ENCODE measurements at regions of chr16 and their contacts with region 1.

Region 1: GRCh38 chr16:4506450-4506849 is 30.3 kb downstream of the HMOX2 start:
- DNase-seq: peak; percentile 74
- ATAC-seq: peak; percentile 75
- H3K4me3 Mint-ChIP-seq: no peak overlapping the region
- H3K27ac Mint-ChIP-seq: peak overlapping the region; percentile 88
- H3K4me1 Mint-ChIP-seq: peaks cover 48% of the 10 kb centered on the region
- H3K27me3 Mint-ChIP-seq: no peaks in the 10 kb centered on the region
- CTCF ChIP-seq: peak; percentile 97

Region 2: GRCh38 chr16:4487955-4488498 is 18.4 kb before region 1 on chr16:
- CTCF ChIA-PET with region 1: interaction called, 14 read pairs
- POLR2A ChIA-PET with region 1: interaction called, 8 read pairs
- intact Hi-C with region 1: no loop called
- DNase-seq: no peak
- ATAC-seq: peak; percentile 43
- H3K4me3 Mint-ChIP-seq: no peak overlapping the region
- H3K27ac Mint-ChIP-seq: peak overlapping the region; percentile 86
- H3K4me1 Mint-ChIP-seq: peaks cover 55% of the 10 kb centered on the region
- H3K27me3 Mint-ChIP-seq: no peaks in the 10 kb centered on the region
- CTCF ChIP-seq: no peak

Region 3: DNA sequence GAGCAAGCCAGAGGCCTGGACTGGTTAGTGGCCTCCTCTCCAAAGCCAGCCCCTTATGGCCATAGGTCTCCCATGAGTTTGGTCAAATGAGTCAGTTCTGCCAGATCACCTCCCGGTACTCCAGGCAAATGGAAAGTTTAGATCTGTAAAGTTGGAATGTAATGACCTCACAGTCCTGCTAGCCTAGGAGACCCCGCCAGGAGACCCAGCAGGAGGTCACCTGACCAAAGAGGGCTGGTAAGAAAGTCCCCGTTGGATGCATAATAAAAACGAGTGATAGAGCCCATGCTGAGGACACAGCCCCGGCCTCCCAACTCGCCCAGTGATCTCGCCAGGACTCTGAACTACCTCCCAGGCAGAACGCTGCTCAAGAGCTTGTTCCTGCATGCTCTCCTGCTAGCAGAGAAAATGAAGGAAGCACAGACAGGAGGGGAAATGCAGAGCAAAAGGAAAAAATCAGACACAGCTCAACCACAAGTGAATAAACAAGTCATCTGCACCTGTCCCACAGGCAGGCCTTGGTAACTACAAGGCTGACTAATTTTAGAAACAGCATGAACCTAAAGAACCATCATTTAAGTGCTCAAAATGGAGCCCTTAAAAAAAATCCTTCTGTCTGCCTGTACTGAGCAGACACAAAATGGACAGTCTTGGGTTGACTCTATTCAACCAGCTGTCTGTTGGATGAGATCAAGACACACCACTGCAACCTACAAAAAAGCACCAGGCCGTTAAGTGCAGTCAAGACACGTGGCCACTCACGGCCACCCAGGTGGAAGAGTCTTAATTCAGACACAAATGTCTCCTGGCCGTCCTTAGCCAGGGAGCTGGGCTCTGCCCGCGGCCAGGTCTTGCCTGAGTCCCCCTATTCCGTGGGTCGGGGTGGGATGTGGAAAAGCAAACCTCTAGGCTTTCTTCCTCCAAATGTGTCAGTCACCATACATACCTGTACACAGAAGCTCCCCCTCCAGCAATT is 22.9 kb after region 1 on chr16:
- CTCF ChIA-PET with region 1: interaction called, 17 read pairs
- POLR2A ChIA-PET with region 1: interaction called, 4 read pairs
- intact Hi-C with region 1: no loop called
- DNase-seq: peak; percentile 54
- ATAC-seq: peak; percentile 82
- H3K4me3 Mint-ChIP-seq: peak overlapping the region; percentile 34
- H3K27ac Mint-ChIP-seq: peak overlapping the region; percentile 96
- H3K4me1 Mint-ChIP-seq: peaks cover 45% of the 10 kb centered on the region
- H3K27me3 Mint-ChIP-seq: no peaks in the 10 kb centered on the region
- CTCF ChIP-seq: no peak

Region 4: DNA sequence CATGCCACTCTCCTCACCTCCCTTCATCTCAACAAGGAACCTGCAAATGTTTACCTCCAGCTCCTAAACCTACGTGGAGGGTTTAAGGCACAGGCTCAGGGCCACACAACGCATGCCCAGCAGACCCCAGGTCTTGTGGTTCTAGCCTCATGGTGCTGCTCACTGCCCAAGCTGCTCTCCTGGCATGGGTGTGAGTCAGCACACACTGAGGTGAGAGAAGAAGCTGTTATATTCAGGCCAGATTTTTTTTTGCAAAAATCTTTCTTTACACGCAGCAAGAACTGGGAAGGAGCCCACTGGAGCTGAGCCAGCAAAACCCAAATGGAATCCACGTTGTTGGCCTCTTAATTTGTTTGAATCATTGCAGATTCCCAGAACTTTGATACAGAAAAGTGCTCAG is 44.1 kb after region 1 on chr16:
- CTCF ChIA-PET with region 1: interaction called, 174 read pairs
- POLR2A ChIA-PET with region 1: interaction called, 9 read pairs
- intact Hi-C with region 1: loop called (anchors 2 kb)
- DNase-seq: no peak
- ATAC-seq: no peak
- H3K4me3 Mint-ChIP-seq: no peak overlapping the region
- H3K27ac Mint-ChIP-seq: no peak overlapping the region
- H3K4me1 Mint-ChIP-seq: peaks cover 3% of the 10 kb centered on the region
- H3K27me3 Mint-ChIP-seq: no peaks in the 10 kb centered on the region
- CTCF ChIP-seq: no peak

Region 5: GRCh38 chr16:4586291-4586690 is 79.8 kb after region 1 on chr16:
- CTCF ChIA-PET with region 1: interaction called, 18 read pairs
- POLR2A ChIA-PET with region 1: interaction called, 3 read pairs
- intact Hi-C with region 1: no loop called
- DNase-seq: no peak
- ATAC-seq: no peak
- H3K4me3 Mint-ChIP-seq: no peak overlapping the region
- H3K27ac Mint-ChIP-seq: no peak overlapping the region
- H3K4me1 Mint-ChIP-seq: peaks cover 3% of the 10 kb centered on the region
- H3K27me3 Mint-ChIP-seq: peaks cover 4% of the 10 kb centered on the region
- CTCF ChIP-seq: no peak